Common myeloid progenitor, CD34-positive (primary cell): ENCODE measurements at regions of chr9 and their contacts with region 1.

Region 1: DNA sequence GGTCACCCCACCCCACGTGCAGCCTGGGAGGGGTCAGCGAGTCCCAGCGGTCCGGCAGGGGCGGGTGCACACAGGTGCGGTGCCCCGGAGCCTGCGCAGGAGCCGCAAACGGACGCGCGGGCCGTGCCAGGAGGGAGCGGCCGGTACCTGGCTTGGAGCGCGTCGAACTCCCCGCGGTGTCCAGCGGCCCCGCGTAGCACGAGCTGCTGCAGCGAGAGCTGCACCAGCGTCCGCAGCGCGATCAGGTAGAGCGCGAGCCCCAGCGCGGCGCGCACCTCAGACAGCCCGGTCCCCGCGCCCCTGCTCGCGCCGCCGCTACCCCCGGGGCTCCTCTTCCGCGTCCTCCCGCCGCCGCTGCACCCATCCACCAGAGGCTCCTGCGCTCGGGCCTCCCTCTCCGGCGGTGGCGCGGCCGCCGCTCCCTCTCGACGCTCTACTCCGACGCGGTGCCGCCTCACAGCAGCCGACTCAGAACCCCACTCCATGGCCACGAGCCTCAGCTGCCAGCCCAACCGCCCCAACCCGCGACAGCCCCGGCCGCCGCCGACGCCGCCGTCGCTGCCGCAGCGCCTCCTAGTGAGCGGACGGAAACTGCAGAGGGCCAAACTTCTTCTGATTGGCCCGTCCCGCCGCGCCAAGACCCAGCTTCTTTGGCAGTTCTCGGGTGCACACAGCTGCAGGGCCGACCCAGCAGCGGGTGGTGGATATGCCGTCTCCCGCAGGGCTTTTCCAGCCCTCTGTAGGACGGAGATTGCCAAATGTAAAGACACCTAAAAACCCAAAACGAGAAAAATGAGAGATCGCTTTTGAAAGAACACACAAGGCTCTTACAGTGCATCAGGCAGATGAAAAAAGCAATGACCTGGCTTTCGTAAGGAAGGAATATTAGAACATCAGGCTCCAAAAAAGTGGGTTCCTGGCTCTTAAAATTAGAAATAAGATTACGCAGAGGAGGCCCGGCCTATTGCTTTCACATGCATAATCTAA is at the start of gene ERMP1:
- DNase-seq: peak; percentile 86 to 92 (median 91)
- H3K4me3 ChIP-seq: peak within 1 kb of the TSS; percentile 86 to 100 (median 93)
- H3K27ac ChIP-seq: peak within 1 kb of the TSS; percentile 50 to 78
- H3K4me1 ChIP-seq: peaks cover 15 to 56% (median 24%) of the 10 kb centered on the region in 4 experiments
- H3K27me3 ChIP-seq: no peaks in the 10 kb centered on the region

Region 2: GRCh38 chr9:5817869-5818268 is 15.0 kb before region 1 on chr9:
- CTCF ChIA-PET with region 1: interaction called, 24 read pairs
- POLR2A ChIA-PET with region 1: no interaction called
- DNase-seq: peak in 2 of 3 donors; percentile 56 to 57
- H3K4me3 ChIP-seq: no peak overlapping the region
- H3K27ac ChIP-seq: peak overlapping the region; percentile 5 to 18
- H3K4me1 ChIP-seq: peaks cover 0 to 8% (median 0%) of the 10 kb centered on the region in 4 experiments
- H3K27me3 ChIP-seq: no peaks in the 10 kb centered on the region

Region 3: GRCh38 chr9:5843794-5844504 is 11.1 kb after region 1 on chr9:
- CTCF ChIA-PET with region 1: interaction called, 110 read pairs
- POLR2A ChIA-PET with region 1: interaction called, 4 read pairs
- DNase-seq: peak in 1 of 3 donors; percentile 63
- H3K4me3 ChIP-seq: peak overlapping the region in 3 of 7 experiments; percentile 44 to 65 (median 53)
- H3K27ac ChIP-seq: peak overlapping the region in 1 of 2 experiments; percentile 51
- H3K4me1 ChIP-seq: peaks cover 51 to 94% (median 83%) of the 10 kb centered on the region in 4 experiments
- H3K27me3 ChIP-seq: no peaks in the 10 kb centered on the region

Region 4: GRCh38 chr9:5851445-5851844 is 18.6 kb after region 1 on chr9:
- CTCF ChIA-PET with region 1: interaction called, 110 read pairs
- POLR2A ChIA-PET with region 1: interaction called, 6 read pairs
- DNase-seq: peak in 2 of 3 donors; percentile 88 to 94
- H3K4me3 ChIP-seq: no peak overlapping the region
- H3K27ac ChIP-seq: peak overlapping the region in 1 of 2 experiments; percentile 44
- H3K4me1 ChIP-seq: peaks cover 26 to 70% (median 56%) of the 10 kb centered on the region in 4 experiments
- H3K27me3 ChIP-seq: no peaks in the 10 kb centered on the region

Region 5: DNA sequence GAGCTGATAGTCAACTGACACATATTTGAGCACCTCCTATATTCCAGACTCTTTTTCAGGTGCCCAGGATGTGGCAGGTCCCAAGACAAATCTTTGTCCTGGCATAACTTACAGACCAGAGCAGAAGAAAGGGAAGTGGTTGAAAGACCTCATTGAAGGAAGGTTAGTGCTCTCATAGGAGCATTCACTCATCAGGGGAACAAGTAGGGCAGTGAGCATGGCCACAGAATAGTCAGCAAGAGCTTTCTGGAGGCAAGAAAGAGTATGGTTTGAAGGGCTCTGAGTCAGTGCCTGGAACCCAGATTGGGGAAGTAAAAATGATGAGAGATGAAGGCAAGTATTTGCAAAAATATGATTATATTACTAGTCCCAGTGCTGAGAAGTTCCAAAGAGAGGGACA is 25.1 kb after region 1 on chr9:
- CTCF ChIA-PET with region 1: interaction called, 17 read pairs
- POLR2A ChIA-PET with region 1: no interaction called
- DNase-seq: peak; percentile 27 to 85 (median 80)
- H3K4me3 ChIP-seq: no peak overlapping the region
- H3K27ac ChIP-seq: no peak overlapping the region
- H3K4me1 ChIP-seq: peaks cover 1 to 44% (median 23%) of the 10 kb centered on the region in 4 experiments
- H3K27me3 ChIP-seq: no peaks in the 10 kb centered on the region

Region 6: GRCh38 chr9:5899292-5899691 is 66.5 kb after region 1 on chr9:
- CTCF ChIA-PET with region 1: interaction called, 19 read pairs
- POLR2A ChIA-PET with region 1: no interaction called
- DNase-seq: peak; percentile 38 to 58 (median 56)
- H3K4me3 ChIP-seq: no peak overlapping the region
- H3K27ac ChIP-seq: no peak overlapping the region
- H3K4me1 ChIP-seq: peaks cover 0 to 14% (median 1%) of the 10 kb centered on the region in 4 experiments
- H3K27me3 ChIP-seq: no peaks in the 10 kb centered on the region

Region 7: DNA sequence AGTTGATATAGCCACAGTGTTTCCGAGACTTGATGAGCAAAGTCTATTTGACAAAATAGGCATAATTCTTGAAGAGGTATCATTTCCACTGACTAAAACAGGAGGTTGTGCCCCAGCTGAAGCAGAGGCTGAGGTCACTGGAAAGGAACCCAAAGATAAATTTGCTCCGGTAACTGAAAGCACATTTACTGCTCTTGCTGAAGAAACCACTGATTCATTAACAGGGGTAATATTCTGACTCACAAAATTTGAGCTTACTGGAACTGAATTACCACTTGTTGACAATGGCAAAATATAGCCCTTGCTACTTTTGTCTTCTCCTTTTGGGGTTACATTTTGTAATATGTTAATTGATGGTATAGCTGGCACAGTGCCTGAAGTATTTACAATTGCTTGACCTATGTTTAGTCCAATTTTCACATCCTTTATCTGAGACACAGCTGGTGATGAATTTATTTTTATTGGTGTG is 88.1 kb after region 1 on chr9:
- CTCF ChIA-PET with region 1: no interaction called
- POLR2A ChIA-PET with region 1: no interaction called
- DNase-seq: no peak
- H3K4me3 ChIP-seq: no peak overlapping the region
- H3K27ac ChIP-seq: no peak overlapping the region
- H3K4me1 ChIP-seq: no peaks in the 10 kb centered on the region
- H3K27me3 ChIP-seq: no peaks in the 10 kb centered on the region

Region 8: GRCh38 chr9:5953743-5954707 is 121.2 kb after region 1 on chr9:
- CTCF ChIA-PET with region 1: no interaction called
- POLR2A ChIA-PET with region 1: no interaction called
- DNase-seq: peak in 1 of 3 donors; percentile 7
- H3K4me3 ChIP-seq: no peak overlapping the region
- H3K27ac ChIP-seq: no peak overlapping the region
- H3K4me1 ChIP-seq: peaks cover under 1 to 4% (median 4%) of the 10 kb centered on the region in 4 experiments
- H3K27me3 ChIP-seq: no peaks in the 10 kb centered on the region